HepG2 (cell line): ENCODE measurements at regions of chr7 and their contacts with region 1.

Region 1: DNA sequence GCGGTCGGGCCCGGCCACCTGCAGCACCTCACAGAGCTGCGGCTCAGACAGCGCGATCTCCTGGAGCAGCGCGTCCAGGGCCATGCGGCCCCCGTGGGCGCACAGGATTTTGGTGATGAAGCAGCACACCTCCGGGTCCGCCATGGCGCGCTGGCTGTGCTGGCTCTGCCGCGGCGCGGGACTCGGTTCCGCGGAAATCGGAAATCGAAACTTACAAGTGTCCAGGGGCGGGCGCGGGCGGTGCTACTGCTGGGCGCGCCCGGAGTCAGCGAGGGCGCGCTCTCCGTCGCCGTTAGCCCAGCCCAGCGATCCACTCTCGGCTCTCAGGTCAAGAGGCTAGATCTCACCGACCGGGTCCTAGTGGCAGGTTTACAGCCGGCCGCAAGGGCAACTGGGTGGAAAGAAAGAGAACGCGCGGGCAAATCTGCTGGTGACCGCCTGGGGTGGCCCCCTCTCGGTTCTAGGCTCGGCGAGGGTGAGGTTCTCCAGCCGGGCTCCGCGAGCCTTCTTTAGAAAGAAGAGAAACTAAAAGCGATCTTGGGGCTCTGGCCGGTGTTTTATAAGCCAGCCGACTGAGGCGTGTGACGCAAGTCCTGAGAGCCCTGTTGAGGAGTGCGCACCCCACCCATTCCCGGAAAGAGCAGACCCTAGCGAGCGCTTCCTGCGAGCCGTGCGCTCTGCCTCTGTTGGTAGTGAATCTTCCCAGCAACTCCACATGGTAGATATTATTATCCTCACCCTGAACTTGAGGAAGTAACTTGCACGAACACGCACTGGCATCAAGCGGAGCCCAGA is at the start of gene ZC3HAV1:
- DNase-seq: peak; percentile 76
- ATAC-seq: peak; percentile 93
- H3K4me3 ChIP-seq: peak within 1 kb of the TSS; percentile 72 to 91 (median 80)
- H3K27ac ChIP-seq: peak within 1 kb of the TSS; percentile 91
- H3K4me1 ChIP-seq: peaks cover 70% of the 10 kb centered on the region
- H3K27me3 ChIP-seq: no peaks in the 10 kb centered on the region; a peak in 1 of 5 replicates
- CTCF ChIP-seq: no peak
- EP300 ChIP-seq: no peak
- POLR2A ChIP-seq: peak; percentile 59 to 62
- RAD21 ChIP-seq: no peak; the same call in none of the 2 replicates
- total RNA-seq, gene ZC3HAV1: 23.7 and 33.5 TPM in 2 replicates

Region 2: DNA sequence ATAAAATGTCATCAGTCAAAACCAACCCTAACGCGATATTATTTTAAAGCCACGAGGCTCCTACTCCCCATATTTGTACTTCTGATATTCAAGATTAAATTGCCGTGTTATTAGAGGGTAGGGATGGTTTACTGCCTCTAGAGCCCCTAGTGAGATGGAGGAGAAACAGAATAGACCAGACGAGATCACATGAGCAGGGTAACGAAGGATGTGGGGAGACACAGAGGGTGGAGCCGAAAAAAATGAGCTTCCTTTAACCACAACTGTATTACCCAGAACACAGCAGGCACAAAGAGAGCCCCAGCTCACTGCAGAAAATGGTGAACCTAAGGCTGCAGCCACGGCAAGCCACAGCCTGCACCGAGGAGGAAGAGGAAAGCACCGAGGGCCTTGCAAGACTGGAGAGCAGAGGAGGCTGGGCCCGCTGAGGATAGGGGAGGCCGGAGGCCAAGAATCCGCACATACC is 14.2 kb before region 1 on chr7:
- CTCF ChIA-PET with region 1: no interaction called
- POLR2A ChIA-PET with region 1: no interaction called
- in situ Hi-C with region 1: no loop called
- intact Hi-C with region 1: no loop called
- DNase-seq: no peak
- ATAC-seq: no peak
- H3K4me3 ChIP-seq: no peak overlapping the region
- H3K27ac ChIP-seq: no peak overlapping the region
- H3K4me1 ChIP-seq: peaks cover 31% of the 10 kb centered on the region
- H3K27me3 ChIP-seq: no peaks in the 10 kb centered on the region
- CTCF ChIP-seq: no peak
- EP300 ChIP-seq: no peak
- POLR2A ChIP-seq: no peak
- RAD21 ChIP-seq: no peak

Region 3: GRCh38 chr7:139133335-139134139 is 24.2 kb after region 1 on chr7:
- CTCF ChIA-PET with region 1: no interaction called
- POLR2A ChIA-PET with region 1: interaction called, 3 read pairs
- in situ Hi-C with region 1: no loop called
- intact Hi-C with region 1: loop called (anchors 2 kb)
- DNase-seq: peak; percentile 70
- ATAC-seq: peak; percentile 98
- H3K4me3 ChIP-seq: peak overlapping the region; percentile 61 to 80 (median 66)
- H3K27ac ChIP-seq: peak overlapping the region; percentile 1
- H3K4me1 ChIP-seq: peaks cover 29% of the 10 kb centered on the region
- H3K27me3 ChIP-seq: no peaks in the 10 kb centered on the region; a peak in 1 of 5 replicates
- CTCF ChIP-seq: no peak; the same call in 1 of the 2 replicates
- EP300 ChIP-seq: peak in 1 of 2 experiments; percentile 37; a peak in 1 of 4 replicates
- POLR2A ChIP-seq: peak in 1 of 2 experiments; percentile 70; a peak in 3 of 4 replicates
- RAD21 ChIP-seq: peak; percentile 52; the same call in 1 of the 2 replicates